ENCODE measurements at regions of chr2 and their contacts with region 1.

Region 1: GRCh38 chr2:172931918-172932520 is 143.6 kb upstream of the MAP3K20 start:
- DNase-seq: peak; percentile 78
- ATAC-seq: peak; percentile 15 to 49

Region 2: GRCh38 chr2:172806493-172806892 is 125.5 kb before region 1 on chr2:
- intact Hi-C with region 1: loop called (anchors 2 to 5 kb)
- DNase-seq: no peak
- ATAC-seq: peak; percentile 54 to 55

Region 3: DNA sequence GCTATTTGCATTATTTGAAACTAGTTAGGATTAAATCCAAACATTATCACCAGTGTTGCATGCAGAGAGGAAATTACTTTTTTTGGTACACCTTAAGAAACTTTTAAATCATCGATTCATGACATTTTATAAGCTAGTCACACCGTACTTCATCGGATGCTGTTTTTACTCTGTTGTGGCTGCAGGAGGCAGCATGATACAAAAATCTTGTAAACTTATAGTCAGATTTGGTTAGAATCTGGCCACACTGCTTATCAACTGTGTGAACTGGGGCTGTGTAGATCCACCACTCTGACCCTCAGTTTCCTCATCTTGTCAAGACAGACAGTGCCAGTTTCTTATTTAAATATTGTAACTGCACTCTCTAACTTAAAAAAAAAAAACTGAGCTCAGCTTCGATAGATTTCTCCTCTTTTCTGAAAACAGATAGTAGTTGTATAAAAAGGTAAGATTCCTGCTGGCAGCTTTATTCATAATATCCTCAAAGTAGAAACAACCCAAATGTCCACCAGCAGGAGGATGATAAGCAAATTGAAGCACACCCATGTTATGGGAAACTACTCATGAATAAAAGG is 118.6 kb before region 1 on chr2:
- intact Hi-C with region 1: loop called (anchors 2 to 5 kb)
- DNase-seq: no peak
- ATAC-seq: peak; percentile 65 to 70

Region 4: GRCh38 chr2:172864182-172864581 is 67.8 kb before region 1 on chr2:
- intact Hi-C with region 1: loop called (anchors 2 to 5 kb)
- DNase-seq: peak; percentile 46
- ATAC-seq: peak; percentile 64 to 75